ENCODE measurements at regions of chr15 and their contacts with region 1.

Region 1: GRCh38 chr15:84748274-84749110 is at the start of gene ZNF592:
- DNase-seq: peak; percentile 75 to 87
- H3K4me3 ChIP-seq: peak within 1 kb of the TSS; percentile 89
- H3K4me3 Mint-ChIP-seq: peak within 1 kb of the TSS; percentile 94
- H3K27ac Mint-ChIP-seq: peak within 1 kb of the TSS; percentile 97
- H3K4me1 ChIP-seq: peaks cover 39% of the 10 kb centered on the region
- H3K4me1 Mint-ChIP-seq: peaks cover 34% of the 10 kb centered on the region
- H3K27me3 ChIP-seq: no peaks in the 10 kb centered on the region
- H3K27me3 Mint-ChIP-seq: no peaks in the 10 kb centered on the region
- CTCF ChIP-seq: no peak
- total RNA-seq, gene ZNF592: 29.1 and 30.6 TPM in 2 replicates

Region 2: GRCh38 chr15:84633311-84634227 is 114.9 kb before region 1 on chr15:
- CTCF ChIA-PET with region 1: no interaction called
- POLR2A ChIA-PET with region 1: no interaction called
- intact Hi-C with region 1: no loop called
- DNase-seq: peak; percentile 65 to 72
- H3K4me3 ChIP-seq: peak overlapping the region; percentile 70
- H3K4me3 Mint-ChIP-seq: peak overlapping the region; percentile 91
- H3K27ac Mint-ChIP-seq: peak overlapping the region; percentile 74
- H3K4me1 ChIP-seq: 0 out of 2 replicates have a peak, but pooled peaks cover 7% of the 10 kb centered on the region
- H3K4me1 Mint-ChIP-seq: no peaks in the 10 kb centered on the region
- H3K27me3 ChIP-seq: no peaks in the 10 kb centered on the region
- H3K27me3 Mint-ChIP-seq: no peaks in the 10 kb centered on the region
- CTCF ChIP-seq: no peak

Region 3: GRCh38 chr15:84706409-84706808 is 42.1 kb before region 1 on chr15:
- CTCF ChIA-PET with region 1: interaction called, 10 read pairs
- POLR2A ChIA-PET with region 1: no interaction called
- intact Hi-C with region 1: no loop called
- DNase-seq: no peak
- H3K4me3 ChIP-seq: no peak overlapping the region
- H3K4me3 Mint-ChIP-seq: no peak overlapping the region
- H3K27ac Mint-ChIP-seq: no peak overlapping the region
- H3K4me1 ChIP-seq: 0 out of 2 replicates have a peak, but pooled peaks cover 4% of the 10 kb centered on the region
- H3K4me1 Mint-ChIP-seq: no peaks in the 10 kb centered on the region
- H3K27me3 ChIP-seq: no peaks in the 10 kb centered on the region
- H3K27me3 Mint-ChIP-seq: no peaks in the 10 kb centered on the region
- CTCF ChIP-seq: no peak

Region 4: GRCh38 chr15:84716036-84716799 is 32.3 kb before region 1 on chr15 and contains the start of gene SEC11A:
- CTCF ChIA-PET with region 1: interaction called, 4 read pairs
- POLR2A ChIA-PET with region 1: interaction called, 12 read pairs
- intact Hi-C with region 1: loop called (anchors 1 kb)
- DNase-seq: peak; percentile 95 to 97
- H3K4me3 ChIP-seq: peak within 1 kb of the TSS; percentile 60
- H3K4me3 Mint-ChIP-seq: peak within 1 kb of the TSS; percentile 81
- H3K27ac Mint-ChIP-seq: peak within 1 kb of the TSS; percentile 87
- H3K4me1 ChIP-seq: peaks cover 5% of the 10 kb centered on the region
- H3K4me1 Mint-ChIP-seq: peaks cover 6% of the 10 kb centered on the region
- H3K27me3 ChIP-seq: no peaks in the 10 kb centered on the region
- H3K27me3 Mint-ChIP-seq: no peaks in the 10 kb centered on the region
- CTCF ChIP-seq: no peak
- total RNA-seq, gene SEC11A: 200 and 211 TPM in 2 replicates

Region 5: GRCh38 chr15:84734794-84735479 is 13.6 kb before region 1 on chr15:
- CTCF ChIA-PET with region 1: interaction called, 3 read pairs
- POLR2A ChIA-PET with region 1: interaction called, 5 read pairs
- intact Hi-C with region 1: loop called (anchors 1 kb)
- DNase-seq: peak; percentile 95
- H3K4me3 ChIP-seq: no peak overlapping the region; the same call in 1 of the 2 replicates
- H3K4me3 Mint-ChIP-seq: peak overlapping the region; percentile 66
- H3K27ac Mint-ChIP-seq: peak overlapping the region; percentile 94
- H3K4me1 ChIP-seq: peaks cover 27% of the 10 kb centered on the region
- H3K4me1 Mint-ChIP-seq: peaks cover 22% of the 10 kb centered on the region
- H3K27me3 ChIP-seq: no peaks in the 10 kb centered on the region
- H3K27me3 Mint-ChIP-seq: no peaks in the 10 kb centered on the region
- CTCF ChIP-seq: no peak

Region 6: GRCh38 chr15:84981054-84981710 is 232.7 kb after region 1 on chr15:
- CTCF ChIA-PET with region 1: no interaction called
- POLR2A ChIA-PET with region 1: no interaction called
- intact Hi-C with region 1: loop called (anchors 2 kb)
- DNase-seq: peak; percentile 93 to 98
- H3K4me3 ChIP-seq: peak overlapping the region; percentile 86
- H3K4me3 Mint-ChIP-seq: peak overlapping the region; percentile 92
- H3K27ac Mint-ChIP-seq: peak overlapping the region; percentile 91
- H3K4me1 ChIP-seq: 0 out of 2 replicates have a peak, but pooled peaks cover 8% of the 10 kb centered on the region
- H3K4me1 Mint-ChIP-seq: no peaks in the 10 kb centered on the region
- H3K27me3 ChIP-seq: no peaks in the 10 kb centered on the region
- H3K27me3 Mint-ChIP-seq: no peaks in the 10 kb centered on the region
- CTCF ChIP-seq: peak; percentile 6 to 27

Measured in Caco-2 (cell line).